Activated CD8-positive, alpha-beta T cell treated with anti-CD3 and anti-CD28 coated beads for 36 hours (primary cell): ENCODE measurements at regions of chr17 and their contacts with region 1.

Region 1: GRCh38 chr17:28763804-28764266 is 20.0 kb downstream of the TRAF4 start:
- DNase-seq: peak; percentile 93
- ATAC-seq: peak; percentile 88
- H3K4me3 Mint-ChIP-seq: no peak overlapping the region
- H3K27ac Mint-ChIP-seq: no peak overlapping the region
- H3K4me1 Mint-ChIP-seq: peaks cover 16% of the 10 kb centered on the region
- H3K27me3 Mint-ChIP-seq: no peaks in the 10 kb centered on the region
- CTCF ChIP-seq: peak; percentile 97

Region 2: GRCh38 chr17:28720247-28720996 is 43.4 kb before region 1 on chr17:
- CTCF ChIA-PET with region 1: interaction called, 99 read pairs
- POLR2A ChIA-PET with region 1: interaction called, 12 read pairs
- intact Hi-C with region 1: loop called (anchors 5 kb)
- DNase-seq: peak; percentile 58
- ATAC-seq: no peak
- H3K4me3 Mint-ChIP-seq: peak overlapping the region; percentile 100
- H3K27ac Mint-ChIP-seq: peak overlapping the region; percentile 99
- H3K4me1 Mint-ChIP-seq: peaks cover 40% of the 10 kb centered on the region
- H3K27me3 Mint-ChIP-seq: peaks cover 11% of the 10 kb centered on the region
- CTCF ChIP-seq: peak; percentile 32

Region 3: GRCh38 chr17:28777178-28777577 is 13.3 kb after region 1 on chr17:
- CTCF ChIA-PET with region 1: interaction called, 70 read pairs
- POLR2A ChIA-PET with region 1: interaction called, 3 read pairs
- intact Hi-C with region 1: no loop called
- DNase-seq: no peak
- ATAC-seq: no peak
- H3K4me3 Mint-ChIP-seq: no peak overlapping the region
- H3K27ac Mint-ChIP-seq: peak overlapping the region; percentile 23
- H3K4me1 Mint-ChIP-seq: peaks cover 39% of the 10 kb centered on the region
- H3K27me3 Mint-ChIP-seq: no peaks in the 10 kb centered on the region
- CTCF ChIP-seq: no peak

Region 4: DNA sequence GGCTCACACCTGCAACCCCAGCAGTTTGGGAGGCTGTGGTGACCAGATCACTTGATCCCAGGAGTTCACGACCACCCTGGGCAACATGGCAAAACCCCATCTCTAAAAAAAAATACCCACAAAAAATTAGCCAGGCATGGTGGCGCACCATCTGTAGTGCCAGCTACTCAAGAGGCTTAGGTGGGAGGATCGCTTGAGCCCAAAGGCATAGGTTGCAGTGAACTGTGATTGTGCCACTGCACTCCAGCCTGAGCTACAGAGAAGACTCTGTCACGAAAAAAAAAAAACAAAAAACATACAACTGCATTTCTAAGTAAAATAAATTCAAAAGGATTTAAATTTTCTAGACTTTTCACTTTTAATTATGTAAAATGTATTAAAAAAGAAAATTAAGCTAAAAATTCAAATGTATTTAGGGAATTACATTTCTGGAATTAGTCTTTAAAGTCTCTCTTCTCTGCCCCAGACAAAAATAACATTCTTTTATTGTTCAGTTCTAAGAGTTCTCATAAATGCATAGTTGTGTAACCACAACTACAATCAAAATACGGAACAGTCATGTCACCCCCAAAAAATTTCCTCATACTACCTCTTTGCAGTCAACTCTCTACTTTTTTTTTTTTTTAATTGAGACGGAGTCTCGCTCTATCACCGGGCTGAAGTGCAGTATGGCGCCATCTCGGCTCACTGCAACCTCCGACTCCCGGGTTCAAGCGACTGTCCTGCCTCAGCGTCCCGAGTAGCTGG is 64.6 kb after region 1 on chr17:
- CTCF ChIA-PET with region 1: interaction called, 16 read pairs
- POLR2A ChIA-PET with region 1: no interaction called
- intact Hi-C with region 1: no loop called
- DNase-seq: no peak
- ATAC-seq: no peak
- H3K4me3 Mint-ChIP-seq: no peak overlapping the region
- H3K27ac Mint-ChIP-seq: no peak overlapping the region
- H3K4me1 Mint-ChIP-seq: peaks cover 9% of the 10 kb centered on the region
- H3K27me3 Mint-ChIP-seq: no peaks in the 10 kb centered on the region
- CTCF ChIP-seq: no peak

Region 5: GRCh38 chr17:28871056-28871579 is 107.3 kb after region 1 on chr17:
- CTCF ChIA-PET with region 1: interaction called, 20 read pairs
- POLR2A ChIA-PET with region 1: no interaction called
- intact Hi-C with region 1: no loop called
- DNase-seq: peak; percentile 75
- ATAC-seq: peak; percentile 96
- H3K4me3 Mint-ChIP-seq: no peak overlapping the region
- H3K27ac Mint-ChIP-seq: peak overlapping the region; percentile 98
- H3K4me1 Mint-ChIP-seq: peaks cover 24% of the 10 kb centered on the region
- H3K27me3 Mint-ChIP-seq: no peaks in the 10 kb centered on the region
- CTCF ChIP-seq: no peak

Region 6: DNA sequence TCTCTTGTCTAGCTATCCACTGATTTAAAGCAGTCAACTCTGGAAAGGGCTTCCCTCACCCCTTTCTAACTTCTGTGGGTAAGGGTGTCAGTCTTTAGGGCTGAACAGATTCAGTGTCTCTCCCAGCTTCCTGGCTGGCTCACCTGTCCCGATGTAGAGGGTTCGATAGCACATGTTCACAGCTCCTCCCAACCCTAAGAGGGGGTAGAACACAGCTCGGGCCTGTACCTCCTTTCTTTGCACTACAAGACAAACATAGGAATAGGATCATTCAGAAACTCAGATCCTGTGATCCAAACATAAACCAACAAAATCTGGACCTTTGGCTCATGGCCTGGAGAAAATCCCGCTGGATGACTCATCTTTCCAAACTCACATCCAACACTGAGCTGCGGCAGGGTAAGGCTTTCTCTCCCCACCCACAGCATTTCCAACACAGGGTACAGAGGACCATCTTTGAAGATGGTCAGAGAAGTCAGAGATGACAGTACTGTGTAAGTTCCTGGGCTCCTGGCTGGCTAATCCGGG is 144.9 kb after region 1 on chr17:
- CTCF ChIA-PET with region 1: interaction called, 32 read pairs
- POLR2A ChIA-PET with region 1: no interaction called
- intact Hi-C with region 1: no loop called
- DNase-seq: no peak
- ATAC-seq: no peak
- H3K4me3 Mint-ChIP-seq: no peak overlapping the region
- H3K27ac Mint-ChIP-seq: peak overlapping the region; percentile 40
- H3K4me1 Mint-ChIP-seq: peaks cover 2% of the 10 kb centered on the region
- H3K27me3 Mint-ChIP-seq: no peaks in the 10 kb centered on the region
- CTCF ChIP-seq: no peak

Region 7: GRCh38 chr17:28951991-28952975 is 188.4 kb after region 1 on chr17:
- CTCF ChIA-PET with region 1: interaction called, 24 read pairs
- POLR2A ChIA-PET with region 1: no interaction called
- intact Hi-C with region 1: no loop called
- DNase-seq: peak; percentile 98
- ATAC-seq: peak; percentile 75
- H3K4me3 Mint-ChIP-seq: no peak overlapping the region
- H3K27ac Mint-ChIP-seq: no peak overlapping the region
- H3K4me1 Mint-ChIP-seq: peaks cover 15% of the 10 kb centered on the region
- H3K27me3 Mint-ChIP-seq: no peaks in the 10 kb centered on the region
- CTCF ChIP-seq: no peak